ENCODE measurements at regions of chr9 and their contacts with region 1.

Region 1: GRCh38 chr9:113807173-113808061 is 68.7 kb upstream of the ZNF618 start:
- DNase-seq: peak in 2 of 3 donors; percentile 29 to 60
- ATAC-seq: peak; percentile 94 to 97 (median 96)
- H3K4me3 ChIP-seq: no peak overlapping the region
- H3K27ac ChIP-seq: no peak overlapping the region
- H3K4me1 ChIP-seq: peaks cover 0 to 6% (median 0%) of the 10 kb centered on the region in 4 donors
- H3K27me3 ChIP-seq: no peaks in the 10 kb centered on the region
- CTCF ChIP-seq: peak; percentile 87 to 94 (median 90)
- POLR2A ChIP-seq: no peak

Region 2: DNA sequence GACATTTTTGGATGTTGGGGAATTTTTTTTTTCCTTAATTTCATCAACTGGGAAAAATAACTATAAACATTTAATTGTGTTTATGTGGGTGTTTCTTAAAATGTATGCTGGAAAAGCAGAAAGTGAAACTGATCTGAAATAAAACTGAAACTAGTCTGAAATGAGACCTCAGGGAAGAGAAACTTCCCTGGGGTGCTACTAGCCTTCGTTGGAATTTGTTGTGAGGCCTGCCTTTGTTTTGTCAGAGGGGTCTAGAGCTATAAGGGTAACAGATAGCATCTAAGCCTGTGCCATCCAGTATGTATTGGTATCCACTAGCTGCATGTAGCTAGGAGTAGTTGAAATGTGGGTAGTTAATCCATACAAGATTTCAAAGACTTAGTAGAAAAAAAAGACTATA is 79.0 kb after region 1 on chr9:
- intact Hi-C with region 1: no loop called
- DNase-seq: no peak
- ATAC-seq: peak; percentile 56 to 73 (median 66)
- H3K4me3 ChIP-seq: peak overlapping the region; percentile 16 to 29 (median 21)
- H3K27ac ChIP-seq: peak overlapping the region; percentile 10 to 79 (median 71)
- H3K4me1 ChIP-seq: peaks cover 0 to 29% (median 15%) of the 10 kb centered on the region in 4 donors
- H3K27me3 ChIP-seq: no peaks in the 10 kb centered on the region
- CTCF ChIP-seq: no peak
- POLR2A ChIP-seq: no peak

Region 3: GRCh38 chr9:114033397-114034103 is 226.1 kb after region 1 on chr9:
- intact Hi-C with region 1: loop called in 1 of 2 experiments (anchors 10 kb)
- DNase-seq: peak in 1 of 3 donors; percentile 41
- ATAC-seq: peak; percentile 47 to 70 (median 62)
- H3K4me3 ChIP-seq: no peak overlapping the region
- H3K27ac ChIP-seq: no peak overlapping the region
- H3K4me1 ChIP-seq: no peaks in the 10 kb centered on the region
- H3K27me3 ChIP-seq: no peaks in the 10 kb centered on the region
- CTCF ChIP-seq: peak; percentile 32 to 54 (median 42)
- POLR2A ChIP-seq: no peak

Measured in right lobe of liver (tissue), 6 donors.